Activated CD4-positive, alpha-beta memory T cell treated with anti-CD3 and anti-CD28 coated beads, Interleukin-2, amount 10 ng/mL, durations not matched to agents 7 days and 5 days (primary cell): ENCODE measurements at regions of chr1 and their contacts with region 1.

Region 1: DNA sequence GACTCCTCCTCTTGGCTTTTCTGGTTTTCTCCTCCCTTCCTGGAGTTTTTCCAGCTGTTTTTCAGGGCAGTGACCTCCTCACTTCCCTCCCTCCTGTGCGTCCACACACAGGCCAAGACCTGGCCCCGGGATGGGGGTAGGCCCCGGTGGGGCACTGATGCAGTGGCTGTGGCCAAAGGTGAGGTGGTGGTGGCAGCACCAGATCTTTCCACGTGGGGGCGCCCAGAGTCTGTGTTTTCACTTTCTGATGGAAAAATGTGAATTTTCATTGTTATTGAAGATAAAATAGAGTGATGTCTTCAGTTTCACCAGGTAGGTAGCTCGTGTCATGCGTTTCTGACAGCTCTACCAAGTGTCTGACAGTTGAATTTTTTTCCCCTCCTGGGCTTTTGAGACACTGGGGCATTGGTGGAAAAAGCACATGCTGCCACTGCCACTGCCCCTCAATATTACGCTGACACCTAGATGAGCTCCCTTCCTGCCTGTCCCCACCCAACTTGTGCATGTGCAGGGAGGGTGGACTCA is 39.9 kb upstream of the MAGOH start:
- DNase-seq: peak; percentile 75
- H3K4me3 Mint-ChIP-seq: no peak overlapping the region
- H3K27ac Mint-ChIP-seq: peak overlapping the region; percentile 48
- H3K4me1 Mint-ChIP-seq: no peaks in the 10 kb centered on the region
- H3K27me3 Mint-ChIP-seq: no peaks in the 10 kb centered on the region

Region 2: GRCh38 chr1:53294567-53294966 is 16.3 kb after region 1 on chr1:
- CTCF ChIA-PET with region 1: interaction called, 28 read pairs
- POLR2A ChIA-PET with region 1: interaction called, 4 read pairs
- DNase-seq: peak; percentile 64
- H3K4me3 Mint-ChIP-seq: no peak overlapping the region
- H3K27ac Mint-ChIP-seq: peak overlapping the region; percentile 90
- H3K4me1 Mint-ChIP-seq: peaks cover 55% of the 10 kb centered on the region
- H3K27me3 Mint-ChIP-seq: no peaks in the 10 kb centered on the region